Activated naive CD8-positive, alpha-beta T cell treated with anti-CD3 and anti-CD28 coated beads, Interleukin-2, amount 10 ng/mL, durations not matched to agents 7 days and 5 days (primary cell): ENCODE measurements at regions of chr2 and their contacts with region 1.

Region 1: GRCh38 chr2:216498418-216499413 is at the start of gene RPL37A:
- DNase-seq: peak; percentile 88
- ATAC-seq: peak; percentile 95
- H3K4me3 Mint-ChIP-seq: peak within 1 kb of the TSS; percentile 99
- H3K27ac Mint-ChIP-seq: peak within 1 kb of the TSS; percentile 90
- H3K4me1 Mint-ChIP-seq: peaks cover 55% of the 10 kb centered on the region
- H3K27me3 Mint-ChIP-seq: no peaks in the 10 kb centered on the region
- total RNA-seq, gene RPL37A: 2,315 to 2,375 TPM

Region 2: DNA sequence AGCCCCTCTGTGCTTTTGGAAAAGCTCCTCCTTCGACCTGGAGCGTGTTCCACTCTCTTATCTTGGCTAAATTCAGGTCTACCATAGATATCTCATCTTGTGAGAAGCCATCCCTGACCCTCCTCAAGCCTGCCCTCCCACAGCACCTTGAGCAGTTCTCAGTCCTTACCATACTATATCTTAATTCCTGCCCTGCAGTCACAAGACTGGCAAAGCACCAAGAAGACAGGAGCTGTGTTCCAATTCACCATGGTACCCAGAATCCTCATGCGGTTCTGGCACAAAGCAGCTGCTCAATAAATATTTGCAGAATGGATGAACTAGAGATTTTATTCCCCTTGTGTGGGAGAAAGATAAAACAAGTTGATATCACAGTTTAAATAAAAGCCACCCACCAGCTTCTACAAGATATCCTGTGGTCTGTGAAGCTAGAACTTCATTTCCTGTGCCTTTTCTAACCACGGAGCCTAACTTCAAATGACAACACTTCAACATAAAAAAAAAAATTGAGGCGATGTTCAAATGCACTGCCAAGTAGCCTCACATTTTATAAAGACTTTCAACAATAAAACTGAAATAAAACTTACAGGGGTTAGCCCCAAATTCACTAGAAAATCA is 146.0 kb before region 1 on chr2:
- POLR2A ChIA-PET with region 1: interaction called, 14 read pairs
- DNase-seq: no peak
- ATAC-seq: peak; percentile 78
- H3K4me3 Mint-ChIP-seq: peak overlapping the region; percentile 73
- H3K27ac Mint-ChIP-seq: peak overlapping the region; percentile 98
- H3K4me1 Mint-ChIP-seq: peaks cover 51% of the 10 kb centered on the region
- H3K27me3 Mint-ChIP-seq: no peaks in the 10 kb centered on the region

Region 3: GRCh38 chr2:216412022-216412999 is 86.4 kb before region 1 on chr2 and contains the start of gene SMARCAL1:
- POLR2A ChIA-PET with region 1: interaction called, 11 read pairs
- DNase-seq: peak; percentile 97
- ATAC-seq: peak; percentile 89
- H3K4me3 Mint-ChIP-seq: peak within 1 kb of the TSS; percentile 96
- H3K27ac Mint-ChIP-seq: peak within 1 kb of the TSS; percentile 97
- H3K4me1 Mint-ChIP-seq: peaks cover 18% of the 10 kb centered on the region
- H3K27me3 Mint-ChIP-seq: peaks cover 7% of the 10 kb centered on the region
- total RNA-seq, gene SMARCAL1: 24.5 to 25.7 TPM